ENCODE measurements at regions of chr4 and their contacts with region 1.

Region 1: DNA sequence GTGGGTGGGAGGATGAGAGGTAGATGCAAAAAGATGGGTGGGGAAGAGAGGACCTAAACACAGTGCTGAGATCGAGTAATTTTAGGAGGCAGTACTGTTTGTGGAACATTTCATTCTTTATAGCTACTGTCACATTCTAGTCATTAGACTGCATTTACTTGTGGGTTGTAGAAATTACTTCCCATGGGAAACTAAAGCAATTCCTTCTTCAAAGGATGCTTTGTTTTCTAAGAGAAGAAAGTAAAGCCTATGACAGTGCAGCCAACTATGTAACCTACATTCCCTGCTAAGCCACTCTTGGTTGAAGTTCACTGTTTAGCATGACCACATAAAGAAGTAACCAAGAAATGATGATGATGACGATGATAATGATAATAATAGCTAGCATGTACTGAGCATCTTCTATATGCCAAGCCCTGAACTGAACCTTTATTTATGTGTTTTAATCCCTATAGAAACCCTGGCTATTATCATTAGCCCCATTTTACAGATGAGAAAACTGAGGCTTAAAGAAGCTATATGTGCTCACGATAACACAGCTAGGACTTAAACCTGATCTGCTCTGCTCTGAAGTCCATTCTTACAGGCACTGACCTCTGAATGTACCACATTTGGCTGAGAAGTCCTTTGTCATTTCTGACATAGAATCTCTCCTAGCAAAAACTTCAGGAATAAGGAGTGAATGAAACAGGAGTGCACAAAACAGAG is 114.5 kb upstream of the KIT start:
- DNase-seq: peak; percentile 96
- H3K4me3 ChIP-seq: no peak overlapping the region
- CTCF ChIP-seq: no peak

Region 2: DNA sequence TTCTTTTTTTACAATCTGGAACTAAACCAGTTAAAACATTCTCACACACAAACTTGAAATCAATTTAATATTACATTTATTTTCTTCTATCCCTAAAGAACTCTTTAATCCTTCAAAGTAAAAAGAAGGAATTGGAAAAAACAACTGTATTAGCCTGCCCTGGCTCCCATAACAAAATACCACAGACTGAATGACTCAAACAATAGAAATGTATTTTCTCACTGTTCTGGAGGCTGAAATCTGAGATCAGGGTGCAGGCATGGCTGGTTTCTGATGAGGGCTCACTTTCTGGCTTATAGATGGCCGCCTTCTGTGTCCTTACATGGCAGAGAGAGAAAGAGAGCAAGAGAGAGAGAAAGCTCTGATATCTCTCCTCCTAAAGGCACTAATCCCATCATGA is 164.8 kb before region 1 on chr4:
- CTCF ChIA-PET with region 1: no interaction called
- POLR2A ChIA-PET with region 1: no interaction called
- DNase-seq: no peak
- H3K4me3 ChIP-seq: no peak overlapping the region
- CTCF ChIP-seq: no peak

Region 3: DNA sequence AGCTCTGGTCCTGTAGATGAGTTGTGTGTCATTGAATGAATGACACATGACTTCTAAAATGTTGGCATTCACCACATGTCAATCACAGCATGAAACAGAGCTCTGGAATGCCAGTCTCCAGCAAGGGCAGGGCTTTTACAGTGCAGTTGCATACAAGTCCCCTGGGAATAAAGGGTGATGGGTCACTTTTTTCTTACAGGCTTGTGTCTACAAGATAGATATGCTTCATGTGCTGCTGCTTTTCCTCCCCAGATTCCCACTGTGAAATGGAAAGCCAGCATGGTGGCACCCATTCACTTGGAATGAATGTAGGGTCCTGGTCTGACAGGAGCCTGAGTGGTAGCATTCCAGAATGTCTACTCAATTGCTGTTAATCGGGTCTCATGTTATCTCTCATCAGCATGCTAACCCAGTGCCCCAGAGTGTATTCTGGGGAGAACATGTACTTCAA is 44.6 kb before region 1 on chr4:
- CTCF ChIA-PET with region 1: no interaction called
- POLR2A ChIA-PET with region 1: interaction called, 12 read pairs
- DNase-seq: peak; percentile 44
- H3K4me3 ChIP-seq: no peak overlapping the region
- CTCF ChIP-seq: no peak

Region 4: DNA sequence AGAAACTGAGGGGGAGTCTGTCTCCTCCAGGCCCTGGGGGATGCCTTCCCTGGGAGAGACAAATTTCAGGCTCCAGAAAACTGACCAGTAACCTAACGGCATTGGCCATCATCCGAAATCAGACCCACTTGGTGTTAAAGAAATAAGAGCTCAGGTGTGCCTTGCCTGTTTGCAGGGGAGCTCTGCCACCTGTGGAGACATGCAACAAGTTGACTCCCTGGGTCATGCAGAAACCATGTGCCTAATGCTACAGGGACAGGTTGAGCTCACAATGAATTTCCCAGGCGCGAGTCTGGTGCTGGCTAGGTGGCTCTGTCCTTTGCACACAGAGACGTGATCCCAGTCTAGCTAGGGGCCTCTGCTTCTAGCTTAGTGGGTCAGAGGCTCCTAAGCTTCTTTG is 18.7 kb after region 1 on chr4:
- CTCF ChIA-PET with region 1: no interaction called
- POLR2A ChIA-PET with region 1: no interaction called
- DNase-seq: no peak
- H3K4me3 ChIP-seq: no peak overlapping the region
- CTCF ChIP-seq: no peak

Region 5: GRCh38 chr4:54632537-54632936 is 89.3 kb after region 1 on chr4:
- CTCF ChIA-PET with region 1: no interaction called
- POLR2A ChIA-PET with region 1: no interaction called
- DNase-seq: no peak
- H3K4me3 ChIP-seq: no peak overlapping the region
- CTCF ChIP-seq: no peak

Measured in AG04449 (cell line).